Tibial artery (tissue), 4 donors: ENCODE measurements at regions of chr16 and their contacts with region 1.

Region 1: GRCh38 chr16:27326738-27327585 is 13.2 kb downstream of the IL4R start:
- DNase-seq: peak; percentile 94 to 96
- H3K4me3 ChIP-seq: peak overlapping the region in 1 of 2 donors; percentile 34
- H3K27ac ChIP-seq: peak overlapping the region; percentile 97 to 99
- H3K4me1 ChIP-seq: peaks cover 0 to 100% (median 66%) of the 10 kb centered on the region in 4 donors
- H3K27me3 ChIP-seq: no peaks in the 10 kb centered on the region
- CTCF ChIP-seq: peak; percentile 13 to 21

Region 2: GRCh38 chr16:27242868-27243590 is 83.9 kb before region 1 on chr16:
- intact Hi-C with region 1: loop called (anchors 5 kb)
- DNase-seq: peak; percentile 72 to 82
- H3K4me3 ChIP-seq: peak overlapping the region; percentile 34 to 42
- H3K27ac ChIP-seq: peak overlapping the region; percentile 78 to 80
- H3K4me1 ChIP-seq: peaks cover 0 to 71% (median 53%) of the 10 kb centered on the region in 4 donors
- H3K27me3 ChIP-seq: no peaks in the 10 kb centered on the region
- CTCF ChIP-seq: no peak

Region 3: DNA sequence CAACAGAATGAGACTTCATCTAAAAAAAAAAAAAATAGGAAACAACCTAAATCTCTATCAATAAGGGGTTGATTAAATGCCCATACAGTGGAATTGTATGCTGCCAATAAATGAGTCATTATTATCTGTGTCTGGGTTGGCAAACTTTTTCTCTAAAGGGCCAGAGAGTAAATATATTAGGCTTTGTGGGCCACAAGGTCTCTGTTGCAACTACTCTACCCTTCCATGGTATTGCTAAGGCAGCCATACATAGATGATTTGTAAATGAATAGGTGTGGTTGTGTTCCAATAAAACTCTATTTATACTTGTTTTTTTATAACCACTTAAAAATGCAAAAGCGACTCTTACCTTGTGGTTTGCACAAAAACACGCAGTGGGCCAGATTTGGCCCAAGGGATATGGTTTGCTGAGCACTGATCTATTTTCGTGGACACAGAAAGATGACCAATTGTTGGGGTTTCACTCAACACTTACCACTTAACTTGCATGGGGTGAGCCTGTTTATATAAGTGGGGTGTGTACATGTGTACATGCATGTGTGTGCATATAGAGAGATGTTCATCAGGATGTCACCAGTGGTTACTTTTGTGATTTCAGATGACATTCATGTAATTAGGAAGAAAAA is 25.6 kb before region 1 on chr16:
- intact Hi-C with region 1: no loop called
- DNase-seq: no peak
- H3K4me3 ChIP-seq: no peak overlapping the region
- H3K27ac ChIP-seq: no peak overlapping the region
- H3K4me1 ChIP-seq: no peaks in the 10 kb centered on the region
- H3K27me3 ChIP-seq: no peaks in the 10 kb centered on the region
- CTCF ChIP-seq: no peak